ENCODE measurements at regions of chr15 and their contacts with region 1.

Region 1: DNA sequence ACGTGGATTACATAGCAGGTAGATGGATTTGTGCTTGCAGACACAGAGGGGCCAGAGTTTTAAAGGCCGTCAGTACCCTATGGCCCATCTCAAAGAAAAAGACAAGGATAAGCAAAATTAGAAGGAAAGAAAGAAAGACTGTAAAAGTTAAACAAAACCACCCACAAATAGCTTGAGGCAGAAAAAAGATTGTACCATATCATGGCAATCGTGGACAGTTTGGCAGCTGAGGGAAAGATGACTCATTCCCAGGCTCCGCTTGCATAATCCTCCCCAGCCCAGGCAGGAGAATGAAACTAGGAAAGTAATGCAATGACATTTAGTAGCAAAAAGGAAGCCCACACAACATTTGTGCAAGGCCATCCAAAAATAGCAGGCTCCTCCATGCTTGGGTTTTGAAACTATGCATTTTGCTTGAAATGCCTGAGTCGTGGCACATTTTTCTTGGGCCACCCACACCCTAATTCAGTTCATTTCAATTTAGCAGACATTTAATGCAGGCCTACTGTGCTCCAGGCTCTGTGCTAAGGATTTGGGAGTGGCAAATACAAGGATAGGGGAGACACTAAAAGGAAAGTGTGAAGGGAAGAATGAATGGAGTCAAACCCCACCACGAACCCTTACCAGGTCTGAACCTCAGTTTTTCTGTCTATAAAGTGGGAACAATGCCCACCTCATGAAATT is 40.9 kb upstream of the SMAD3 start:
- DNase-seq: peak; percentile 75 to 83
- H3K4me3 ChIP-seq: no peak overlapping the region
- H3K27ac ChIP-seq: peak overlapping the region; percentile 82
- H3K4me1 ChIP-seq: peaks cover 65% of the 10 kb centered on the region
- H3K27me3 ChIP-seq: no peaks in the 10 kb centered on the region
- CTCF ChIP-seq: no peak

Region 2: GRCh38 chr15:67039384-67040075 is 15.1 kb after region 1 on chr15:
- CTCF ChIA-PET with region 1: no interaction called
- POLR2A ChIA-PET with region 1: no interaction called
- intact Hi-C with region 1: loop called (anchors 2 kb)
- DNase-seq: peak; percentile 72 to 92
- H3K4me3 ChIP-seq: peak overlapping the region; percentile 39; the same call in 1 of the 2 replicates
- H3K27ac ChIP-seq: no peak overlapping the region
- H3K4me1 ChIP-seq: peaks cover 14% of the 10 kb centered on the region
- H3K27me3 ChIP-seq: no peaks in the 10 kb centered on the region
- CTCF ChIP-seq: no peak